Breast epithelium (tissue), 4 donors: ENCODE measurements at regions of chr21 and their contacts with region 1.

Region 1: DNA sequence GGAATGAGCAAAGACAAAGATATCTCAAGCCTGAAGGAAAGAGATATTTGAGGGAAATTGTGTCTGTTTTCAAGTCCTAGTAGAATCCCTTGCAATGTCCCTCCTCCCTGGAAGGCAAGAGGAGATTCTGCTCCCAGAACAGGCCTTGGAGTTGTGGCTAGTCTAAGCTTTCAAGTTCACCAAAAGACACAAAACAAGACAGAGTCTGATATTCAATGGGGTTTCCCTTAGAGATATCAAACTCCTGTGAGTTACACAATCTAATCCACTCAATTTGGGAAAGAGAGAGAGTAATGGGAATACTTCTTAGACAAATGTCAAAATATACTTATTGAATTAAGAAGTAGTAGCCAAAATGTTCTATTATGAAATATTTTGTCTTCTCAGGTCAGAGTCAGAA is 162.8 kb upstream of the ADAMTS5 start:
- DNase-seq: no peak
- H3K4me3 ChIP-seq: no peak overlapping the region
- H3K27ac ChIP-seq: no peak overlapping the region
- H3K4me1 ChIP-seq: no peaks in the 10 kb centered on the region
- H3K27me3 ChIP-seq: no peaks in the 10 kb centered on the region
- CTCF ChIP-seq: no peak
- POLR2A ChIP-seq: no peak

Region 2: DNA sequence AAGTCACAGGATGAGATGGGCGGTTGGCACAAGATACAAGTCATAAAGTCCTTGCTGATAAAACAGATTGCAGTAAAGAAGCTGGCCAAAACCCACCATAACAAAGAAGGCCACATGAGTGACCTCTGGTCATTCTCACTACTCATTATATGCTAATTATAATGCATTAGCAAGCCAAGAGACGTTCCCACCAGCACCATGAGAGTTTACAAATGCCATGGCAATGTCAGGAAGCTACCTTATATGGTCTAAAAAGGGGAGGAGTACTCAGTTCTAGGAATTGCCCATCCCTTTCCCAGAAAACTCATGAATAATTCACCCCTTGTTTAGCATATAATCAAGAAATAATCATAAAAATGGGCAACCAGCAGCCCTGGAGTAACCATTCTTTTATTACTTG is 884.3 kb before region 1 on chr21:
- intact Hi-C with region 1: no loop called
- DNase-seq: no peak
- H3K4me3 ChIP-seq: no peak overlapping the region
- H3K27ac ChIP-seq: no peak overlapping the region
- H3K4me1 ChIP-seq: no peaks in the 10 kb centered on the region
- H3K27me3 ChIP-seq: no peaks in the 10 kb centered on the region
- CTCF ChIP-seq: no peak
- POLR2A ChIP-seq: no peak

Region 3: DNA sequence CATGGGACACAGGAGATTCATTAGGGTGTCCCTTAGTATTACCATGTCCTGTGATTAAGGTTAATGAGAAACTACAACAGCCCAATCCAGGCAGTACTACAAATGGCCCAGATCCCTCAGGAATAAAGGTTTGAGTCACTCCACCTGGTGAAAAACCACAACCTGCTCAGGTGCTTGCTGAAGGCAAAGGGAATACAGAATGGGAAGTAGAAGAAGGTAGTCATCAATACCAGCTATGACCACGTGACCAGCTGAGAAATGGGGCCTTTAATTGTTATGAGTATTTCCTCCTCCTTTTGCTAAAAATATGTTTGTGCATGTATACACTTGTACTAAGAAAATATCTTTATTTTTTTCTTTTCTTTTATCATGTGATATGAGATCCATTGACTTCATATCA is 71.7 kb before region 1 on chr21:
- intact Hi-C with region 1: loop called (anchors 2 kb)
- DNase-seq: no peak
- H3K4me3 ChIP-seq: no peak overlapping the region
- H3K27ac ChIP-seq: no peak overlapping the region
- H3K4me1 ChIP-seq: no peaks in the 10 kb centered on the region
- H3K27me3 ChIP-seq: no peaks in the 10 kb centered on the region
- CTCF ChIP-seq: no peak
- POLR2A ChIP-seq: no peak

Region 4: DNA sequence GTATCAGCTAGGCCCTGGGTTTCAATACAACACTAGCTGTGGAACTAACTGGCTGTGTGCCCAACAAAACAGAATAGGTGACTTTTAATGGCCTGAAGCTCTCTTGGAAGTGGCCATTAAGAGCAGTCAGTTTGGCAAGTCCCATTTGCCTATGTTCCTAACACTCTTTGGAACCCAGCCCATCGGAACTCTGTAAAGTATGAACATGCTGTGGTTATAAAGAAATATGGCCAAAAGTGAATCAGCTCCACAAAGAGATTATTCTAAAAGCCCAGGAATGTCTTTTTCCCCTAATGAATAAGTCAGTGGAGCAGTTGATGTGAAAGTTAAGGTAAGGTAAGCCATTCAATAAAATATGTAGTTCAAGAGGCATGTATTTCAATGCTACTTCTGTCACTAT is 60.9 kb after region 1 on chr21:
- intact Hi-C with region 1: no loop called
- DNase-seq: peak in 1 of 2 donors; percentile 64
- H3K4me3 ChIP-seq: no peak overlapping the region
- H3K27ac ChIP-seq: peak overlapping the region in 1 of 2 donors; percentile 27
- H3K4me1 ChIP-seq: no peaks in the 10 kb centered on the region
- H3K27me3 ChIP-seq: no peaks in the 10 kb centered on the region
- CTCF ChIP-seq: no peak
- POLR2A ChIP-seq: no peak

Region 5: DNA sequence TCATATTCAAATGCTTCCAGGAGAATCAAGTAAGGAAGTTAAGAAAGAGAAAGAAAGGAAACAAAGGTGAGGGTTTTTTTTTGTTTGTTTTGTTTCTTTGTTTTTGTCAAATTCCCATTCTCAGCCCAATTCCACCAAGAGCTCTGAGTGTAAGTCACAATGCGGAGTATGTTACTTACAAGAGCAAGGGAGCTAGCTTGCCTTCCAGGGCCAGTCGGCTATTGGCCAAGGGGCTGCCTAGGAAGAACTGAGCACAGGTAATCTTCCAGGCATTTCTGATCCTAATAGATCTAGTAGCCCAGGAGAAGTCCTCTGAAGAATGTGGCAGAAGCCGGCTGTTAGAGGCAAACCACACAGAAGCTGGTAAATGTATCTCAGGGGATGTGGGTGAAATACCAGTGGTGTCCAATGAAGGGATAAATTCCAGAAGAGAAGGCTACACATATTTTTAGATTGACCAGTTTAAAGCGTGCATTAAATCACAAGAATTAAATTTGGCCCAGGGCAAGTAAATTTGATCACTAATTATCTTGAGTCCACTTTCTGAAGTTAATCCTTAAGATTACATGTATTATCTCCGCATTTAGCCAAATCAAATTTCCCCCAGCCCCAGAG is 76.8 kb after region 1 on chr21:
- intact Hi-C with region 1: no loop called
- DNase-seq: no peak
- H3K4me3 ChIP-seq: no peak overlapping the region
- H3K27ac ChIP-seq: no peak overlapping the region
- H3K4me1 ChIP-seq: no peaks in the 10 kb centered on the region
- H3K27me3 ChIP-seq: no peaks in the 10 kb centered on the region
- CTCF ChIP-seq: no peak
- POLR2A ChIP-seq: no peak

Region 6: GRCh38 chr21:27329255-27329851 is 199.7 kb after region 1 on chr21:
- intact Hi-C with region 1: no loop called
- DNase-seq: no peak
- H3K4me3 ChIP-seq: no peak overlapping the region
- H3K27ac ChIP-seq: no peak overlapping the region
- H3K4me1 ChIP-seq: no peaks in the 10 kb centered on the region
- H3K27me3 ChIP-seq: no peaks in the 10 kb centered on the region
- CTCF ChIP-seq: no peak
- POLR2A ChIP-seq: no peak